GM13976 (cell line): ENCODE measurements at regions of chr16 and their contacts with region 1.

Region 1: GRCh38 chr16:66490774-66491715 is 58.9 kb downstream of the TK2 start:
- DNase-seq: no peak
- CTCF ChIP-seq: no peak

Region 2: DNA sequence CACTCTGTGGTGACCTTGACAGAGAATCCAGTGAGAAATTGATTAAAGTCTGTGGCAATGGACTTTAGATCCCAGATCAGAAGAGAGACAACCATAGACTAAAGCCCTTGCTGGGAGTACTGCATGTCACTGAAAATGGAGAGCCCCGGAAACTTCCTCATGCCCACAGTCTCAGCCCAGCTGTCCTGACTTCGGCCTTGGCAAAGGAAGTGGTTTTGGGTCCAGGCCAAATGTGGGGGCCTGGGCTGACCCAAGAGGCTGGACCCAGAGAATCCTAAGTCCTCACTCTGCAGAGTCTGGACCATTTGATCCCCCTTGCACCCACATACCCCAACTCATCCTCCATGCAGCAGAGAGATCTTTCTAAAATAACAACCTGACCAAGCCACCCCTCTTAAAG is 68.7 kb before region 1 on chr16:
- in situ Hi-C with region 1: loop called (anchors 5 kb)
- DNase-seq: no peak
- CTCF ChIP-seq: no peak